ENCODE measurements at regions of chr9 and their contacts with region 1.

Region 1: GRCh38 chr9:134135343-134136118 is at the start of gene WDR5:
- H3K4me3 ChIP-seq: peak within 1 kb of the TSS; percentile 71
- H3K27ac ChIP-seq: peak within 1 kb of the TSS; percentile 95
- H3K4me1 ChIP-seq: peaks cover 2% of the 10 kb centered on the region; the same call in 1 of the 2 replicates
- CTCF ChIP-seq: peak; percentile 87

Region 2: GRCh38 chr9:133509179-133510079 is 626.1 kb before region 1 on chr9:
- CTCF ChIA-PET with region 1: no interaction called
- POLR2A ChIA-PET with region 1: no interaction called
- H3K4me3 ChIP-seq: no peak overlapping the region
- H3K27ac ChIP-seq: no peak overlapping the region; the same call in 1 of the 2 replicates
- H3K4me1 ChIP-seq: peaks cover 8% of the 10 kb centered on the region
- CTCF ChIP-seq: peak; percentile 24; the same call in 1 of the 2 replicates

Region 3: DNA sequence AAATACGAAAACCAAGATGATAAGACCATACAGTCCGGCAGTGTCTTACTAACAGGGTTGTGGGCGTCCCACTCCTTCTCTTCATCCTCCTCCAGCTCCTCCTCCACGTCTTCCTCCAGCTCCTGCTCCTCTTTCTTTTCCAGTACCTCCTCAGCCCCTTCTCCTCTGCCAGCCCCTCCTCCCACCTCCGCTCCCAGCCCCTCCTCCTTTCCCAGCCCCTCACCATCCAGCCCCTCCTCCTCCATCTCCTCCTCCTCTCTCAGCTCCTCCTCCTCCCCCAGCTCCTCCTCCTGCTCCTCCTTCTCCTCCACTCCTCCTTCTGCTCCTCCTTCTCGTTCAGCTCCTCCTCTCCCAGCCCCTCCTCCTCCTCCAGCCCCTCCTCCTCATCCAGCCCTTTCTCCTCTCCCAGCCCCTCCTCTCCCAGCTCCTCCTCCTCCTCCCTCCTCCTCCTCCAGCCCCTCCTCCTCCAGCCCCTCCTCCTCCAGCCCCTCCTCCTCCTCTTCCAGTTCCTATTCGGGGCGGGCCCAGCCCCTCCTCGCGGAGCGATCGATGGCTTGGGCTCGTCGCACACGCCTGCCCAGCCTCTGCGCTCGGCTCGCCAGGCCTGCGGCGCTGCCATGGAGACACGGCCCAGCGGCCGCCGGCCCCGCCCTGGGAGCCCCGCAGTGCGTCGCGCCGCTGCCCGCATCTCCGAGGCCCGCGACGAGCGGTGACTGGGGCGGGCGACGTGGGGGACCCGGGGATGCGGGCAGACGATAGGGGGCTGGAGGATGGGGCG is 110.5 kb before region 1 on chr9 and contains the start of gene BRD3OS:
- CTCF ChIA-PET with region 1: interaction called, 3 read pairs
- POLR2A ChIA-PET with region 1: interaction called, 14 read pairs
- H3K4me3 ChIP-seq: peak within 1 kb of the TSS; percentile 50
- H3K27ac ChIP-seq: peak within 1 kb of the TSS; percentile 41; the same call in 1 of the 2 replicates
- H3K4me1 ChIP-seq: 0 out of 2 replicates have a peak, but pooled peaks cover 2% of the 10 kb centered on the region
- CTCF ChIP-seq: no peak

Region 4: GRCh38 chr9:134076644-134077043 is 58.9 kb before region 1 on chr9:
- CTCF ChIA-PET with region 1: no interaction called
- POLR2A ChIA-PET with region 1: no interaction called
- H3K4me3 ChIP-seq: no peak overlapping the region
- H3K27ac ChIP-seq: no peak overlapping the region
- H3K4me1 ChIP-seq: no peaks in the 10 kb centered on the region
- CTCF ChIP-seq: no peak

Region 5: DNA sequence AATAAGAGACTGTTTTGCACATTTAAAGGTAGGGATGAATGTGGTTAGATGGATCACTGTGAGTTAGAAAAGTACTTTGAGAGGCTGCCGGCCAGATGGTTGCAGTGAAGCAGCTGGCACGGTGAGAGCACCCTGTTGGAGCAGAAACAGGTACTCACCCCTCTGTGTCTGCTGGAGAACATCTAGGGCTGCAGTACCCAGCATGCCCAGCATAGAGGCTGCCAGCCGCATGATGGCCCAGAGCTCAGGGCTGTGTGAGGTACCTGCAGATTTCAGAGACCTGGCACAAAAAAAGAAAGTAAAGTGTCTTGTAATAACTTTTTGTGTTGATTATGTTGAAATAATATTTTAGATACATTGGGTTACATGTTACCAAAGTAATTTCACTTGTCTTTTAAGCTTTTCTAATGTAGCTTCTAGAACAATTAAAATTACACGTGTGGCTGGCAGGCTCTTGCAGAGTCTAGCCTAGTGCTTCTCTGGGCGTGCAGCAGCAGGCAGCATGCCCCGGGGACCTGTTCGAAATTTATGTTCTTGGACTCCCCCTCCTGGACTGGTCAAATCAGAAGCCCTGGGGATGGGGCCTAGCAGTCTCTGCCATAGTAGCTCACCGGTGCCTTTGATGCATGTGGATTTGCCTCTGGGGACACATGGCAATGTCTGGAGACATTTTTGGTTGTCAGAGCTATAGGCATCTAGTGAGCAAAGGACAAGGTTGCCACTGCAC is 11.4 kb after region 1 on chr9:
- CTCF ChIA-PET with region 1: interaction called, 3 read pairs
- POLR2A ChIA-PET with region 1: interaction called, 11 read pairs
- H3K4me3 ChIP-seq: no peak overlapping the region
- H3K27ac ChIP-seq: no peak overlapping the region
- H3K4me1 ChIP-seq: no peaks in the 10 kb centered on the region
- CTCF ChIP-seq: no peak

Region 6: GRCh38 chr9:134163353-134164196 is 28.0 kb after region 1 on chr9:
- CTCF ChIA-PET with region 1: interaction called, 4 read pairs
- POLR2A ChIA-PET with region 1: interaction called, 21 read pairs
- H3K4me3 ChIP-seq: peak overlapping the region; percentile 26
- H3K27ac ChIP-seq: no peak overlapping the region
- H3K4me1 ChIP-seq: no peaks in the 10 kb centered on the region; the same call in 1 of the 2 replicates
- CTCF ChIP-seq: no peak

Measured in HEK293 (cell line).